Naive thymus-derived CD8-positive, alpha-beta T cell (primary cell): ENCODE measurements at regions of chr1 and their contacts with region 1.

Region 1: GRCh38 chr1:169601093-169601881 is 15.0 kb upstream of the F5 start:
- DNase-seq: peak in 3 of 10 donors; percentile 36 to 51 (median 50)
- ATAC-seq: no peak
- H3K4me3 Mint-ChIP-seq: peak overlapping the region in 6 of 10 donors; percentile 25 to 60 (median 53)
- H3K27ac Mint-ChIP-seq: peak overlapping the region in 9 of 10 donors; percentile 64 to 95 (median 91)
- H3K4me1 Mint-ChIP-seq: peaks cover 25 to 57% (median 54%) of the 10 kb centered on the region in 4 donors
- H3K27me3 Mint-ChIP-seq: no peaks in the 10 kb centered on the region

Region 2: DNA sequence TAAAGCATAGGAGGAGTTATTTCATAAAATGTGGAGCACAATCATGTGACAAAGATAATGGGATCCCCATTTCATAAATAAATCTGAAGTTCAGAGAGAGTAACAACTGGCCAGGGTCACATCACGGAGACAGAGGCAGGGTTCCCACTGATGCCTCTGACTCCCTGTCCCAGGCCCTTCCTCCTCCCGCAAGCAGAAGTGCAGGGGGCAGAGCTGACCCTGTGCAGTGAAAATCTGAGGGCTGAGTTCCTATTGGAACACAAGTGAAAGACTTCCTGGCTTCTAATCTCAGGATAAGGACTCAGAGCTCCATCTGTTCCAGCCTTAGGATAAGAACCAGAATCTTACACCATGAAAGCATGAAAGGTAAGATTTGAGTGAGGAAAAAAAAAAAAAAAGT is 88.1 kb after region 1 on chr1:
- POLR2A ChIA-PET with region 1: interaction called, 145 read pairs
- DNase-seq: no peak
- ATAC-seq: no peak
- H3K4me3 Mint-ChIP-seq: peak overlapping the region in 8 of 10 donors; percentile 3 to 66 (median 50)
- H3K27ac Mint-ChIP-seq: peak overlapping the region in 1 of 10 donors; percentile 80
- H3K4me1 Mint-ChIP-seq: peaks cover 10 to 44% (median 28%) of the 10 kb centered on the region in 4 donors
- H3K27me3 Mint-ChIP-seq: no peaks in the 10 kb centered on the region

Region 3: DNA sequence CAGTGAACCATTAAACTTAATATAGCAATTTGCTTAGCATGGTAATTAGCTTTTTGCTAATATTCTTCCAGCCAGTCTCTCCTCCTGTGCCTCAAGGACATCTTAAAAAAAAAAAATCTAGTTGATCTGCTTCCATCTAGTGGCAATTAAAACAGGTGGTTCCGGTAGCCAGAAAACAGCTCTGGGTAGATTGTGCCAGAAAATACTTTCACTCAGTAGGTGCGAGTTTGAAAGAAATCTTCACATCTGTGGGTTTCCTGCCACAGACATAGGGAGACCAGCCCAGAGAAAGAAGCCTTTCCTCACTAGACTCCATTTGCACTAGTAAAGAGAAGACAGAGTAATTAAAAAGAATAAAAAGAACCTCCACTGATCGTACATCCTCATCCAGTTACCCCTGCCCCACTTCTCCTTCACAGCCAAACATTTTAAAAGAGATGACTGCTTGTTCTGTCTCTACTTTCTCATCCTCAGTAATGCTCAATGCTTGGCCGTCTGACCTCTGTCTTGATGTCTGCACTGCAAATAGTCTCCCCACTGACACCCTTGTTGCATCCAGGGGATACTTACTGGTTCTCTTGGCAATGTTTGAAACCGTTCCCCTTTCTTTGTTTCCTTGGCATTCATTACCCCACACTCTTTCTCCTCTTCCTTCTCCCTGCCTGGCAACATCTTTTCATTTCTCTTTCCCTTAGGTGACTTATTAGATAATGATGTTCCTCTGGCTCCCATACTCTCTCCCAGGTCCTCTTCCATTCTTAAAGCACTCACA is 93.2 kb after region 1 on chr1:
- POLR2A ChIA-PET with region 1: interaction called, 145 read pairs
- DNase-seq: peak in 9 of 10 donors; percentile 27 to 81 (median 66)
- ATAC-seq: peak; percentile 62 to 68
- H3K4me3 Mint-ChIP-seq: peak overlapping the region; percentile 52 to 86 (median 66)
- H3K27ac Mint-ChIP-seq: peak overlapping the region in 4 of 10 donors; percentile 86 to 96 (median 94)
- H3K4me1 Mint-ChIP-seq: peaks cover 55 to 91% (median 67%) of the 10 kb centered on the region in 4 donors
- H3K27me3 Mint-ChIP-seq: no peaks in the 10 kb centered on the region

Region 4: GRCh38 chr1:169701261-169702005 is 100.1 kb after region 1 on chr1:
- POLR2A ChIA-PET with region 1: interaction called, 145 read pairs
- DNase-seq: peak in 4 of 10 donors; percentile 25 to 79 (median 64)
- ATAC-seq: peak; percentile 76 to 92
- H3K4me3 Mint-ChIP-seq: peak overlapping the region; percentile 37 to 98 (median 91)
- H3K27ac Mint-ChIP-seq: peak overlapping the region in 9 of 10 donors; percentile 87 to 96 (median 93)
- H3K4me1 Mint-ChIP-seq: peaks cover 50 to 99% (median 97%) of the 10 kb centered on the region in 4 donors
- H3K27me3 Mint-ChIP-seq: no peaks in the 10 kb centered on the region

Region 5: GRCh38 chr1:169711469-169712281 is 110.4 kb after region 1 on chr1 and contains the start of gene SELL:
- POLR2A ChIA-PET with region 1: interaction called, 37 read pairs
- DNase-seq: peak; percentile 44 to 88 (median 76)
- ATAC-seq: peak; percentile 72 to 75
- H3K4me3 Mint-ChIP-seq: peak within 1 kb of the TSS; percentile 88 to 98 (median 96)
- H3K27ac Mint-ChIP-seq: peak within 1 kb of the TSS in 9 of 10 donors; percentile 88 to 97 (median 94)
- H3K4me1 Mint-ChIP-seq: peaks cover 13 to 26% (median 22%) of the 10 kb centered on the region in 4 donors
- H3K27me3 Mint-ChIP-seq: no peaks in the 10 kb centered on the region
- polyA plus RNA-seq, gene SELL: 1,427 to 2,162 (median 1,901) TPM